Posterior vena cava (tissue), 2 donors: ENCODE measurements at regions of chrX and their contacts with region 1.

Region 1: GRCh38 chrX:40816906-40817305 is 81.6 kb upstream of the MED14 start:
- DNase-seq: no peak

Region 2: DNA sequence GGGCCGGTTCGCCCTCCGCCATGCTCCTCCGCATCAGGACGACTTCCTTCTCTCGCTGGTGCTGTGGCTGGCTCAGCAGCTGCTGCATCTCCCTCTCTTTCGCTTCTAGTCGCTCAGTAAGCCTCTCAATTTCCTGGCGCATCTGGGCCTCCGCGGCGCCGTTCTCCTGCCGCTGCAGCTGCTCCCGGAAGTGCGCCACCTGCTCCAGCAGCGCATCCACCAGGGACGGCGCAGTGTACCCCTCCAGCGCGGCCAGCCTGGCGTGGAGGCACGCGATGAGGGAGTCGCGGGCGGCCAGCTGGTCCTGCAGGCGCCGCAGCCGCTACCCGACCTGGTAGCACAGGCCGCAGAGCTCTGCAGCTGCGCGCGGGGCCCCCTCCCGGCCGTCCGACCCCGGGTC is 15.8 kb after region 1 on chrX:
- intact Hi-C with region 1: no loop called
- DNase-seq: no peak

Region 3: DNA sequence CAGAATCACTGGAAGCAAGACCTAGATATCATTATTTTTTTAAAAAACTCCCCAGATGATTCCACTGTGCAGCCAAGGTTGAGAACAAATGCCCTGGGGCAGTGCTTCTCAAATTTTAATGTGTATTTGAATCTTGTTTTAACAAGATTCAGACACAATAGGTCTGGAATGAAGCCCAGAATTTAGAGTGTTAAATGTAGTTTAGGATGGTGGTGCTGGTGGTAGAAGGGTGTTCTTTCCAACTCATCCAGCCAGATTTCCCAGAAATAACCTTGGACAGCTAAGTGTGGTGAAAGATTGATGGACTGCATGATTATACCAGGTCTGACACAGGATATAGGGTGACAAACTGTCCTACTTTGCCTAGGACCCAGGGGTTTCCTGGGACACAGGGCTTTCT is 38.5 kb after region 1 on chrX:
- intact Hi-C with region 1: no loop called
- DNase-seq: no peak

Region 4: DNA sequence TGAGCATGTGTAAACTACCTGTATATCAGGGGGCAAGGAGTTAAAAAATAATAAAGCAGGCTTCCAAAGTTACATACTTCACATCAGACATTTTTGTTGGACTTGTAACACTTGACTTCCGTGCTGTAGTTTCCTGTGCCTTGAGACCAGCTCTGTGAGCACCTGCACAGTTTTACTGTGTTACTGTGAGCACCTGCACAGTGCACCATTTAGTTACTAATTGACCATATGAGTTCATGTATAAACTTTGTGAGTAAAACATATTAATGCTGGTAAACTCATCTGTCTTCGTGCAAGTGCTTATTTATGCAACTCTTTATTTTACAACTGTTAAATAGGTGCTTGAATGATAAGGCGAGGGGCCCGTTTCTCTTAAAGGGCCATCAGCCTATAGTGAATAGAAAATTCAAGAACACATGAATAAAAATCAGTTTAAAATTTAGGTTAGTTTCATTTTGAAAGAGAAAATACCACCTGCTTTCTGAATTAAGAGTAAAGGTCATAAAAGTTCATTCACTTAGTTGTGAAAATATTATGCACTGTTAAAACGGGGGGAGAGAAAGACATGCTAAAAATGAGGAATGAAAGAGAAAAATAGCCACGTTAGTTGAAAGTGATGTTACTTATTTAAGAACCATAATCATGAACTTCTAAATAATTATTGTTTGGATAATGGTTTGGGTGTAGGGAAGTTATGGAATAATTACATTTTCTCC is 310.7 kb after region 1 on chrX:
- intact Hi-C with region 1: loop called in 1 of 2 experiments (anchors 5 kb)
- DNase-seq: no peak